Naive thymus-derived CD4-positive, alpha-beta T cell (primary cell): ENCODE measurements at regions of chr15 and their contacts with region 1.

Region 1: DNA sequence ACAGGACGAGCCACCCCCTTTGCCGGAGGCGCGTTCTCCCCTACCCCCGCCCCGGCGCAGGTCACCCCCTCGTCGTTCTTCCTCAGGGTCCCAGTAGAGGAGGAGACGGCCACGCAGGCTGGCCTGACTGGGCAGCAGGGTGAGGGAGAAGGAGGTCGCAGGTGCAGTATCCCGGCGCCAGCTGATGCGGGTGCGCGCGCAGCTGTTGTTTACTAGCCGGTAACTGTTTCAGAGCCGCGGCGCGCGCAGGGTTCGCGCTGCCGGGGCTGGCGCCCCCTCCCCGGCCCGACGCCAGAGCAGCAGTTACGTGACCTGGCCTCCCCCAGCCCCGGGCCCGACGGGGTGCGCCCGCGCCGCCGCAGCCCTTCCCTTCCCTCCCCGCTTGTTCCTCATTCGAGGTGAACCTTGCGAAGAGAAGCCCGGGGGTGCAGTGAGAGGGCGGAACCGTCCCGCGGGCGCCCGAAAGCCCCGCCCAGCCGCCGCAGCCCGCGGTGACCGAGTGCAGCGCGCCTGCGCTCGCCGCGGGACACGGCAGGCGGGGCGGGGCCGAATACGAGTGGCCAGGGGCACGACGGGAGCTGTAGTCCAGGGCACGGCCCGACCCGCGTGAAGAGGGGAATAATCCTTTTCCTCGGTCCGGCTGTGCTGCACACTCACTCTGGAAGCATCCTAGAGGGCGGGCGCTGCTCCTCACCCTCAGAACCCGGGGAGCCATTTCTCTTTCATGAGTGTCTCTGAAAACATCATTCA is at the start of gene SLC12A6:
- DNase-seq: peak; percentile 90 to 93 (median 92)
- ATAC-seq: peak; percentile 94
- H3K4me3 ChIP-seq: peak within 1 kb of the TSS; percentile 96
- H3K4me3 Mint-ChIP-seq: peak within 1 kb of the TSS; percentile 90 to 100 (median 98)
- H3K27ac ChIP-seq: peak within 1 kb of the TSS; percentile 92
- H3K27ac Mint-ChIP-seq: peak within 1 kb of the TSS; percentile 82 to 99 (median 98)
- H3K4me1 ChIP-seq: peaks cover 30 to 41% of the 10 kb centered on the region in 2 donors
- H3K4me1 Mint-ChIP-seq: peaks cover 35 to 72% (median 60%) of the 10 kb centered on the region in 7 donors
- H3K27me3 ChIP-seq: no peaks in the 10 kb centered on the region
- H3K27me3 Mint-ChIP-seq: no peaks in the 10 kb centered on the region
- total RNA-seq, gene SLC12A6: 39.2 to 122 (median 111) TPM

Region 2: GRCh38 chr15:34101366-34102175 is 236.2 kb before region 1 on chr15 and contains the starts of genes EMC7 and PGBD4:
- CTCF ChIA-PET with region 1: no interaction called
- POLR2A ChIA-PET with region 1: interaction called, 4 read pairs
- intact Hi-C with region 1: loop called (anchors 1 kb)
- DNase-seq: peak; percentile 98 to 99 (median 99)
- ATAC-seq: peak; percentile 99
- H3K4me3 ChIP-seq: peak within 1 kb of the TSS; percentile 66
- H3K4me3 Mint-ChIP-seq: peak within 1 kb of the TSS; percentile 91 to 100 (median 96)
- H3K27ac ChIP-seq: peak within 1 kb of the TSS; percentile 96
- H3K27ac Mint-ChIP-seq: peak within 1 kb of the TSS; percentile 97 to 100 (median 98)
- H3K4me1 ChIP-seq: peaks cover 16 to 27% of the 10 kb centered on the region in 2 donors
- H3K4me1 Mint-ChIP-seq: peaks cover 15 to 56% (median 45%) of the 10 kb centered on the region in 7 donors
- H3K27me3 ChIP-seq: no peaks in the 10 kb centered on the region
- H3K27me3 Mint-ChIP-seq: peaks cover 0 to 3% (median 0%) of the 10 kb centered on the region in 5 donors
- total RNA-seq, gene EMC7: 30.1 to 65.1 (median 36.9) TPM
- total RNA-seq, gene PGBD4: 3.2 to 6.5 (median 4.2) TPM

Region 3: GRCh38 chr15:34241372-34242330 is 96.1 kb before region 1 on chr15:
- CTCF ChIA-PET with region 1: interaction called, 8 read pairs
- POLR2A ChIA-PET with region 1: interaction called, 5 read pairs
- intact Hi-C with region 1: loop called (anchors 1 to 2 kb)
- DNase-seq: peak in 7 of 9 donors; percentile 38 to 65 (median 52)
- ATAC-seq: peak; percentile 91
- H3K4me3 ChIP-seq: no peak overlapping the region
- H3K4me3 Mint-ChIP-seq: no peak overlapping the region
- H3K27ac ChIP-seq: no peak overlapping the region
- H3K27ac Mint-ChIP-seq: peak overlapping the region in 7 of 9 donors; percentile 7 to 75 (median 47)
- H3K4me1 ChIP-seq: no peaks in the 10 kb centered on the region
- H3K4me1 Mint-ChIP-seq: peaks cover 0 to 13% (median 4%) of the 10 kb centered on the region in 7 donors
- H3K27me3 ChIP-seq: no peaks in the 10 kb centered on the region
- H3K27me3 Mint-ChIP-seq: no peaks in the 10 kb centered on the region

Region 4: GRCh38 chr15:34318277-34319079 is 19.3 kb before region 1 on chr15:
- CTCF ChIA-PET with region 1: interaction called, 6 read pairs
- POLR2A ChIA-PET with region 1: interaction called, 151 read pairs
- intact Hi-C with region 1: loop called (anchors 1 to 2 kb)
- DNase-seq: peak in 4 of 9 donors; percentile 29 to 38 (median 36)
- ATAC-seq: peak; percentile 83
- H3K4me3 ChIP-seq: peak overlapping the region; percentile 71
- H3K4me3 Mint-ChIP-seq: peak overlapping the region; percentile 92 to 99 (median 97)
- H3K27ac ChIP-seq: peak overlapping the region; percentile 76
- H3K27ac Mint-ChIP-seq: peak overlapping the region; percentile 91 to 99 (median 95)
- H3K4me1 ChIP-seq: peaks cover 0 to 24% of the 10 kb centered on the region in 2 donors
- H3K4me1 Mint-ChIP-seq: peaks cover 36 to 85% (median 62%) of the 10 kb centered on the region in 7 donors
- H3K27me3 ChIP-seq: no peaks in the 10 kb centered on the region
- H3K27me3 Mint-ChIP-seq: no peaks in the 10 kb centered on the region

Region 5: GRCh38 chr15:34470091-34470490 is 132.4 kb after region 1 on chr15:
- CTCF ChIA-PET with region 1: no interaction called
- POLR2A ChIA-PET with region 1: no interaction called
- intact Hi-C with region 1: no loop called
- DNase-seq: no peak
- ATAC-seq: no peak
- H3K4me3 ChIP-seq: no peak overlapping the region
- H3K4me3 Mint-ChIP-seq: no peak overlapping the region
- H3K27ac ChIP-seq: no peak overlapping the region
- H3K27ac Mint-ChIP-seq: peak overlapping the region in 1 of 9 donors; percentile 42
- H3K4me1 ChIP-seq: no peaks in the 10 kb centered on the region
- H3K4me1 Mint-ChIP-seq: peaks cover 0 to 12% (median 0%) of the 10 kb centered on the region in 7 donors
- H3K27me3 ChIP-seq: no peaks in the 10 kb centered on the region
- H3K27me3 Mint-ChIP-seq: peaks cover 5 to 21% (median 9%) of the 10 kb centered on the region in 5 donors

Region 6: GRCh38 chr15:34616613-34617012 is 278.9 kb after region 1 on chr15:
- CTCF ChIA-PET with region 1: no interaction called
- POLR2A ChIA-PET with region 1: no interaction called
- intact Hi-C with region 1: no loop called
- DNase-seq: no peak
- ATAC-seq: no peak
- H3K4me3 ChIP-seq: no peak overlapping the region
- H3K4me3 Mint-ChIP-seq: no peak overlapping the region
- H3K27ac ChIP-seq: no peak overlapping the region
- H3K27ac Mint-ChIP-seq: no peak overlapping the region
- H3K4me1 ChIP-seq: no peaks in the 10 kb centered on the region
- H3K4me1 Mint-ChIP-seq: peaks cover 0 to 3% (median 0%) of the 10 kb centered on the region in 7 donors
- H3K27me3 ChIP-seq: peaks cover 0 to 5% of the 10 kb centered on the region in 2 donors
- H3K27me3 Mint-ChIP-seq: peaks cover 14 to 70% (median 31%) of the 10 kb centered on the region in 5 donors

Region 7: GRCh38 chr15:34987985-34988873 is 650.5 kb after region 1 on chr15 and contains the start of gene ZNF770:
- CTCF ChIA-PET with region 1: no interaction called
- POLR2A ChIA-PET with region 1: no interaction called
- intact Hi-C with region 1: loop called in 1 of 2 experiments (anchors 5 kb)
- DNase-seq: peak; percentile 67 to 91 (median 85)
- ATAC-seq: peak; percentile 95
- H3K4me3 ChIP-seq: peak within 1 kb of the TSS; percentile 99
- H3K4me3 Mint-ChIP-seq: peak within 1 kb of the TSS; percentile 93 to 100 (median 98)
- H3K27ac ChIP-seq: peak within 1 kb of the TSS; percentile 97
- H3K27ac Mint-ChIP-seq: peak within 1 kb of the TSS; percentile 96 to 100 (median 99)
- H3K4me1 ChIP-seq: peaks cover 22 to 25% of the 10 kb centered on the region in 2 donors
- H3K4me1 Mint-ChIP-seq: peaks cover 20 to 55% (median 45%) of the 10 kb centered on the region in 7 donors
- H3K27me3 ChIP-seq: no peaks in the 10 kb centered on the region
- H3K27me3 Mint-ChIP-seq: no peaks in the 10 kb centered on the region
- total RNA-seq, gene ZNF770: 32.5 to 69.9 (median 50.2) TPM

Region 8: GRCh38 chr15:35104526-35105147 is 766.9 kb after region 1 on chr15:
- CTCF ChIA-PET with region 1: no interaction called
- POLR2A ChIA-PET with region 1: no interaction called
- intact Hi-C with region 1: no loop called
- DNase-seq: no peak
- ATAC-seq: no peak
- H3K4me3 ChIP-seq: no peak overlapping the region
- H3K4me3 Mint-ChIP-seq: no peak overlapping the region
- H3K27ac ChIP-seq: no peak overlapping the region
- H3K27ac Mint-ChIP-seq: no peak overlapping the region
- H3K4me1 ChIP-seq: no peaks in the 10 kb centered on the region
- H3K4me1 Mint-ChIP-seq: no peaks in the 10 kb centered on the region
- H3K27me3 ChIP-seq: no peaks in the 10 kb centered on the region
- H3K27me3 Mint-ChIP-seq: no peaks in the 10 kb centered on the region